Aorta (tissue), 5 donors: ENCODE measurements at regions of chr5 and their contacts with region 1.

Region 1: DNA sequence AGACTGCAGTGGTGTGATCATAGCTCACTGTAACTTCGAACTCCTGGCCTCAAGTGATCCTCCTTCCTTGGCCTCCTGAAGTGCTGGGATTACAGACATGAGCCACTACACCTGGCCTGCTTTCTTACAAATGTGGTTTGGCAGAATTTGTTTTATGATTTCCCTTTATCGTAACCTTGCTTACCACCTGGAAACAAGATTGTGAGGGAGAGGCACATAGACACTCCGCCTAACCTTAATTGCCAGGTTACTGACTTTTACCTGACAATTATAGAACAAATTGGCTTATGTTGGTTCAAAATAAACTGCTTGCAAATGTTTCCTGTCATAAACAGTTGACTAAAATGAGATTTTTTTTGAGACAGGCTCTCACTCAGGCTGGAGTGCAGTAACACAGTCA is 26.8 kb upstream of the HMGCR start:
- DNase-seq: no peak
- ATAC-seq: no peak
- H3K4me3 ChIP-seq: no peak overlapping the region
- H3K27ac ChIP-seq: no peak overlapping the region
- H3K4me1 ChIP-seq: no peaks in the 10 kb centered on the region
- H3K27me3 ChIP-seq: no peaks in the 10 kb centered on the region

Region 2: GRCh38 chr5:74954919-74955318 is 355.3 kb before region 1 on chr5:
- intact Hi-C with region 1: loop called in 1 of 2 experiments (anchors 5 kb)
- DNase-seq: no peak
- ATAC-seq: no peak
- H3K4me3 ChIP-seq: no peak overlapping the region
- H3K27ac ChIP-seq: no peak overlapping the region
- H3K4me1 ChIP-seq: no peaks in the 10 kb centered on the region
- H3K27me3 ChIP-seq: no peaks in the 10 kb centered on the region

Region 3: GRCh38 chr5:75225506-75225905 is 84.7 kb before region 1 on chr5:
- intact Hi-C with region 1: no loop called
- DNase-seq: no peak
- ATAC-seq: no peak
- H3K4me3 ChIP-seq: no peak overlapping the region
- H3K27ac ChIP-seq: no peak overlapping the region
- H3K4me1 ChIP-seq: no peaks in the 10 kb centered on the region
- H3K27me3 ChIP-seq: no peaks in the 10 kb centered on the region

Region 4: DNA sequence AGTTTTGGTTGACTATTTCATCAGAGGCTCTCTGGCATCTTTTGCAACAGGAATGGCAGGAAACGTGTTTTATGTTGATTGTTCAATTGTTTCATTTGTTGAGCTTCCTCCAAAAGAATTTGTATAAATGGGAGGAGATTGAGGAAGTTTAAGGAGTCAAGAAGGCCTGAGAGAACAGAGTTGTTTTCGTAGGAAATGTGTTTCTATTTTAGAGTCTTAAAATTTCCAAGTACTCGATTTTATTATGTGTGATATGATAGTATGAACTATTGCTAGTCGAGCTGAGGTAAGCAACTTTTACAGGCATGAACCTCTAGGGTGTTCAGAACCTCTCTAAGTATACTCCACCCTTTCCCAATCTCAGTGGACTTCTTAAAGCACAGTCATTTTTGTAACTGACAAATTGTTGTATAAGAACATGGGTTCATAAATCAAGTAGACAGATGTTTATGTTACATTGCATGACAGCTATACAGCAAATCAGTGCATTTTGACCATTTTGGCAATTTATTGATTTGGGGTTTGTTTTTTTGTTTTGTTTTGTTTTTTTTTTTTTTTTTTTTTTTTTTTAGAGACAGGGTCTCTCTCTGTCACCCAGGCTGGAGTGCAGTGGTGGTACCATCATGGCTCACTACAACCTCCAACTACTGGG is 248.9 kb after region 1 on chr5:
- intact Hi-C with region 1: no loop called
- DNase-seq: no peak
- ATAC-seq: peak; percentile 62
- H3K4me3 ChIP-seq: no peak overlapping the region
- H3K27ac ChIP-seq: no peak overlapping the region
- H3K4me1 ChIP-seq: no peaks in the 10 kb centered on the region
- H3K27me3 ChIP-seq: no peaks in the 10 kb centered on the region